Prostate gland (tissue), 2 donors: ENCODE measurements at regions of chr5 and their contacts with region 1.

Region 1: GRCh38 chr5:172479044-172479783 is 24.9 kb upstream of the SH3PXD2B start:
- DNase-seq: peak; percentile 83
- H3K4me3 ChIP-seq: no peak overlapping the region
- H3K27ac ChIP-seq: no peak overlapping the region
- H3K4me1 ChIP-seq: no peaks in the 10 kb centered on the region
- H3K27me3 ChIP-seq: no peaks in the 10 kb centered on the region
- CTCF ChIP-seq: peak; percentile 77 to 99 (median 90)
- POLR2A ChIP-seq: no peak

Region 2: DNA sequence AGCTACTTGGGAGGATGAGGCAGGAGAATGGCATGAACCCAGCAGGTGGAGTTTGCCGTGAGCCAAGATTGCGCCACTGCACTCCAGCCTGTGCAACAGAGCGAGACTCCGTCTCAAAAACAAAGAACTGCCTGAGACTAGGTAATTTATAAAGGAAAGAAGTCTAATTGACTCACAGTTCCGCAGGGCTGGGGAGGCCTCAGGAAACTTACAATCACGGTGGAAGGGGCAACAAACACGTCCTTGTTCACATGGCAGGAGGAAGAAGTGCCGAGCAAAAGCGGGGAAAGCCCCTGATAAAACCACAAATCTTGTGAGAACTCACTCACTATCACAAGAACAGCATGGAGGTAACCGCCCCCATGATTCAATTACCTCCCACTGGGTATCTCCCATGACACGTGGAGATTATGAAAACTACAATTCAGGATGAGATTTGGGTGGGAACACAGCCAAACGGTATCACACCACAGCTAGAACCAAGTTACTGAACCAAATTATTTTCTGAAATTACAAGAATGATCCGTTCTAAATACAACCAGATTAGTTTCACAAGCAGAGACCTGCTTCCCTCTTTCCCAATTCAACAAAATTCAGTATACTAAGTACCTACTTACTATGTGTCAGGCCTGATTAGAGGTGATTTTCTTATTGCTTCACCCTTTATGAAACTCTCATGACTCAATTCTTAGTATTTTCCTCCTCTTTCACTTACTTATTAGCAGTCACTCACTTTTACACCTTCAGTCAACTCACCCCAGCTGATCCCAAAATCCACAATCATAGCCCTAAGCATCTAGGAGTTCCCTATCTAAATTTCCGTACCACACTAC is 204.1 kb before region 1 on chr5:
- intact Hi-C with region 1: no loop called
- DNase-seq: no peak
- H3K4me3 ChIP-seq: no peak overlapping the region
- H3K27ac ChIP-seq: no peak overlapping the region
- H3K4me1 ChIP-seq: no peaks in the 10 kb centered on the region
- H3K27me3 ChIP-seq: no peaks in the 10 kb centered on the region
- CTCF ChIP-seq: no peak
- POLR2A ChIP-seq: no peak

Region 3: DNA sequence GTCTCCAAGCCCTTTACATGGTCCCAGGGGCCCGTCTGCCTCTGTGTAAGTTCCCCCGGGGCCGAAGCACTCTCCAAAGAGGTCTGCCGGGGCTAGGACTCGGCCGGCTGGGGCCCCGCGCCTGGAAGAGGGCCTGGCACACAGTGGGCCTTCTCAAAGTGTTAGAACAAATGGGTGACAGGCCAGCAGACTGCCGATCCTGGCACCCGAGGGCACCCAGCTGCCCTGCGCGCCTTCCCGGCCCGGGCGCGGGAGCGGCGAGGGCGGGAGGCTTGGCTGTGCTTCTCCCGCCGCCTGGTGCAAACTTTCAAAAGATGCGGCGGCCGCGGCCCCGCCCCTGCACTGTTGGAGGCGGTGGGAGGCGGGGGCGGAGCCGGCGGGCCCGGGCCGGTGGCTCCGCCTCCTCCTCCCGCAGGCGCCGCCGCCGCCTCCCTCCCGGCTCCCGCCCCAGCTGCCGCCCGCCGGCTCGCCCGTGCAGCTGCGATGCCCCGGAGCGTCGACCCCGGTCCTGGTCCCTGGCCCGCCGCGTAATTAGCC is 161.7 kb after region 1 on chr5 and contains the start of gene NEURL1B:
- intact Hi-C with region 1: loop called (anchors 5 kb)
- DNase-seq: peak; percentile 78
- H3K4me3 ChIP-seq: peak within 1 kb of the TSS; percentile 62 to 83
- H3K27ac ChIP-seq: peak within 1 kb of the TSS; percentile 83 to 86
- H3K4me1 ChIP-seq: peaks cover 3% of the 10 kb centered on the region
- H3K27me3 ChIP-seq: no peaks in the 10 kb centered on the region
- CTCF ChIP-seq: peak in 1 of 4 experiments; percentile 28
- POLR2A ChIP-seq: peak; percentile 60
- total RNA-seq, gene NEURL1B: 23.9 to 39.9 TPM

Region 4: GRCh38 chr5:172932313-172933017 is 453.3 kb after region 1 on chr5:
- intact Hi-C with region 1: loop called (anchors 5 kb)
- DNase-seq: peak; percentile 74
- H3K4me3 ChIP-seq: no peak overlapping the region
- H3K27ac ChIP-seq: peak overlapping the region; percentile 35 to 67
- H3K4me1 ChIP-seq: no peaks in the 10 kb centered on the region
- H3K27me3 ChIP-seq: no peaks in the 10 kb centered on the region
- CTCF ChIP-seq: peak; percentile 92 to 99 (median 97)
- POLR2A ChIP-seq: no peak